ENCODE measurements at regions of chr3 and their contacts with region 1.

Region 1: GRCh38 chr3:66038726-66039589 is at the start of gene MAGI1:
- DNase-seq: peak; percentile 93 to 95
- ATAC-seq: peak; percentile 93
- H3K4me3 ChIP-seq: peak within 1 kb of the TSS; percentile 65 to 81
- H3K27ac ChIP-seq: peak within 1 kb of the TSS; percentile 88 to 92
- H3K4me1 ChIP-seq: no peaks in the 10 kb centered on the region
- H3K27me3 ChIP-seq: no peaks in the 10 kb centered on the region
- total RNA-seq, gene MAGI1: 46.1 to 69.2 TPM

Region 2: DNA sequence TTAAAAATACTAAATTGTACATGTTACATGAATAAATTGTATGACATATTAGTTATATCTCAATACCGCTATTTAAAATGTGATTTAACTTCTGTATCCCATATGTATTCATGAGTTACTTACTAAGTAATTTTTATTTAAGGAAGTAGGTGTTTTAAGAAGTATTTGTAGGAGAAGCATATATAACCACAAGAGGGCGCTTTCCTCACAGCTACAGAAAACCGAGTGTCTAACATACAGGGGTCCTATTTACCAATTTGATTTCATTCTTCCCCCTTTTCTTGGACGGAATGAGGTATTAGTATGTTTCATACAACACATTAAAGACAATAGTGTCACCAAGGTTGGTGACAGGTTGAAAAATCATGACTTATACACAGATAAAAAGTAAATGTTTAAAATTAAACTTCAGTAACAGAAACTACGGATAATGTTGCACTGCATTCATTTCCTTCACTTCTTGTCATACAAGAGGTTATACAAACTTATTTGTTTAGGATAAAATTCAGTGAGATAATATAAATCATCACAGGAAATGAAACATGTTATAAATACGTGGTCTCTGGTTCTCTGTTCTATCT is 253.8 kb before region 1 on chr3:
- intact Hi-C with region 1: loop called (anchors 5 to 10 kb)
- DNase-seq: no peak
- ATAC-seq: peak; percentile 37
- H3K4me3 ChIP-seq: no peak overlapping the region
- H3K27ac ChIP-seq: no peak overlapping the region
- H3K4me1 ChIP-seq: peaks cover 7 to 8% of the 10 kb centered on the region in 2 donors
- H3K27me3 ChIP-seq: no peaks in the 10 kb centered on the region

Region 3: GRCh38 chr3:65888980-65889706 is 149.8 kb before region 1 on chr3:
- intact Hi-C with region 1: loop called in 1 of 2 experiments (anchors 2 kb)
- DNase-seq: peak in 1 of 2 donors; percentile 53
- ATAC-seq: peak; percentile 87
- H3K4me3 ChIP-seq: no peak overlapping the region
- H3K27ac ChIP-seq: no peak overlapping the region
- H3K4me1 ChIP-seq: peaks cover 0 to 4% of the 10 kb centered on the region in 2 donors
- H3K27me3 ChIP-seq: no peaks in the 10 kb centered on the region

Region 4: GRCh38 chr3:65953301-65953812 is 85.6 kb before region 1 on chr3:
- intact Hi-C with region 1: loop called in 1 of 2 experiments (anchors 5 kb)
- DNase-seq: no peak
- ATAC-seq: peak; percentile 43
- H3K4me3 ChIP-seq: no peak overlapping the region
- H3K27ac ChIP-seq: peak overlapping the region; percentile 28 to 30
- H3K4me1 ChIP-seq: peaks cover 3 to 16% of the 10 kb centered on the region in 2 donors
- H3K27me3 ChIP-seq: no peaks in the 10 kb centered on the region

Region 5: GRCh38 chr3:65979162-65979561 is 59.8 kb before region 1 on chr3:
- intact Hi-C with region 1: loop called in 1 of 2 experiments (anchors 2 kb)
- DNase-seq: peak in 1 of 2 donors; percentile 70
- ATAC-seq: peak; percentile 58
- H3K4me3 ChIP-seq: no peak overlapping the region
- H3K27ac ChIP-seq: peak overlapping the region; percentile 9 to 48
- H3K4me1 ChIP-seq: peaks cover 1 to 8% of the 10 kb centered on the region in 2 donors
- H3K27me3 ChIP-seq: no peaks in the 10 kb centered on the region

Region 6: GRCh38 chr3:66115858-66116654 is 77.1 kb after region 1 on chr3:
- intact Hi-C with region 1: loop called in 1 of 2 experiments (anchors 5 kb)
- DNase-seq: peak in 1 of 2 donors; percentile 67
- ATAC-seq: no peak
- H3K4me3 ChIP-seq: no peak overlapping the region
- H3K27ac ChIP-seq: peak overlapping the region in 1 of 2 donors; percentile 49
- H3K4me1 ChIP-seq: peaks cover 0 to 4% of the 10 kb centered on the region in 2 donors
- H3K27me3 ChIP-seq: no peaks in the 10 kb centered on the region

Region 7: GRCh38 chr3:66138336-66139313 is 99.7 kb after region 1 on chr3:
- intact Hi-C with region 1: loop called (anchors 5 kb)
- DNase-seq: peak in 1 of 2 donors; percentile 59
- ATAC-seq: peak; percentile 85
- H3K4me3 ChIP-seq: no peak overlapping the region
- H3K27ac ChIP-seq: no peak overlapping the region
- H3K4me1 ChIP-seq: no peaks in the 10 kb centered on the region
- H3K27me3 ChIP-seq: no peaks in the 10 kb centered on the region